Common myeloid progenitor, CD34-positive (primary cell): ENCODE measurements at regions of chr10 and their contacts with region 1.

Region 1: DNA sequence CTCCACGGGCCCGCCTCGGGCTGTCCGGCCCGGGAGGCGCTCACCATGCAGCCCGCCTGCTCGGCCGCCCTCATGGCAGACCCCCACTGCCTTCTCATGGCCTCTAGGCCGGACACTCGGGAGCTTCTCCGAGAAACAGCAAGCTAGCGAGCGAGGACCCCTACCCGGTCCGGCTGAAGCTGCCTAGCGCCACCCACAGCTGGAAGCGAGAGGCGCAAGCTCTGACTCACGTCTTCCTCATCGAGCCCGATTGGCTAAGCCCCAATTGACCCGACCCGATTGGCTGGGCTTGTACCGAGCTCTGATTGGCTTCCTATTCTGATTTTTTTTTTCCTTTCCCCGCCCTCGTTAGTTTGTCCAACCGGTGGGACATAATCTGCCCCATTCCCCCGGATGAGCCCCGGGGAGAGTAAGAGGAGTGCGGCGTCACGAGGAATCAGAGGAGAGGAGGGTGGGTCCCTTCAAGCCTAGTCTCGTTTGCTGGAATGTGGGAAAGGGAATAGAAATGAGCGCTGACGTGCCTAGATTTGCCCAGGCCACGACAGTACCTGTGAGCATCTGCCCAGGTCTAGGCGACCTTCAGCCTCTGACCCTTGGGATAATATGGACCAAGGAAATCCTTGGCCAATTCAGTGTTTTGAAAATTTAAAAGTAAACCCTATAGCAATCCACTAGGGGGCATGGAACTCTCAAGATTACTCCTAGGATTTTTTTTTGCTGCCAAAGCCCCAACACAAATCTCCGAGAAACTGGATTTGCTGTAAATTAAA is at the start of gene TYSND1:
- DNase-seq: peak; percentile 95 to 98 (median 97)
- H3K4me3 ChIP-seq: peak within 1 kb of the TSS; percentile 48 to 82 (median 76)
- H3K27ac ChIP-seq: peak within 1 kb of the TSS in 1 of 2 experiments; percentile 63
- H3K4me1 ChIP-seq: peaks cover 3 to 28% (median 22%) of the 10 kb centered on the region in 4 experiments
- H3K27me3 ChIP-seq: peaks cover 0 to 3% (median 0%) of the 10 kb centered on the region in 5 experiments

Region 2: DNA sequence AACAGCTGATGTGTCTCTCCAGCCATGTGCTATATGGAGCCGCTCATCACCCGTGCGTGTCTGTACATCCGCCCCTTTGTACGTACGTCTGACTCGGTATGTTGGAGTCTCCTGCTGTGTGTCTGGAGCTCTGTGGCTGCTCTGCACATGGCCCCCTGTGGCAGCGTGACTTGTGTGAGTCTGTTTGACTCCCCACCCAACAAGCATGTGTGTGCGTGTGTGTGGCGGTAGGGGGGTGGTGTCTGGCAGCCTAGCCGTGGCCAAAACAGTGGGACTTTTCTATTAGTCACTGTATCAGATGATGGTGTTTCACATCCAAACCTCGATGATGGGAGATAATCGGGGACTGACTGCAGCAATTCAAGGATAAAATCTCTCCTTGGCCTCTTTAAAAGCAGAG is 250.9 kb before region 1 on chr10:
- CTCF ChIA-PET with region 1: no interaction called
- POLR2A ChIA-PET with region 1: no interaction called
- DNase-seq: no peak
- H3K4me3 ChIP-seq: no peak overlapping the region
- H3K27ac ChIP-seq: no peak overlapping the region
- H3K4me1 ChIP-seq: no peaks in the 10 kb centered on the region
- H3K27me3 ChIP-seq: peaks cover 0 to 2% (median 0%) of the 10 kb centered on the region in 5 experiments

Region 3: DNA sequence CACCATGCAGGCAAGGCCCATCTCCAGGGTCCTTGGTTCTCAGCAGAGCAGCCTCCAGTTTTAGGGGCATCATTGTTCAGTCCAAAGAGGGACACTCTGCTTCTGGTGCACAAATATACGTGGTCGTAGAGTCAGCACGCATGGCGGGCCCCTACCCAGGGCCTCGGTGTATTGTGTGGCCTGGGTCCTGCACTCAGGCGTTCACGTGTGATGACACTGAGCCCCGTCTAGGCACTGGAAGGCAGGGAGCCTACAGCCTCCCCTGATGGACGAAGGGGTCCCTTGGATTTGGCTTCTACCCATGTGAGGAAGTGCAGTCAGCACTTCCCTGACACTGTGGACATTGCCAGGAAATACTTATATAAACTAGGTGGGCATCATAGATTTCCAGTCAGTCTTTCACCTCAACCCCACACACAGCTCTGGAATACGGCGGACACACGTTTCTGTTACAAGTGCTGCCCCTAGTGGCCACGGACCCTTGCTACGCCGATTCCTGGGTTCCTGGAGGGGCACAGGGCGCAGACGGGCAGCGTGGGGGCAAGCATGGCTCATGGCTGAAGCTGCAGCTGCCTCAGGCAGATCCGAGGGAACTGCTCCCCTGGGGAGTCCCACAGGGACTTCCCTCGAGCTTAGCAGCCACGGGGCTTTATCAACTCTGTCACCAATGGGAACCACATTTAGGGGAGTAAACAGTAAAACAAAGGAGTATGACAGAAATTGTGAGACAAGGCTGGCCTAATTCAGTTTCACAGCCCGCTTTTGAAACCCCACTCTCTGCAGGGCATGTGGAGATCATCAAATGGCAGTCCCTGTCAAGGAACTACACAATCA is 39.5 kb before region 1 on chr10:
- CTCF ChIA-PET with region 1: interaction called, 11 read pairs
- POLR2A ChIA-PET with region 1: no interaction called
- DNase-seq: peak in 2 of 3 donors; percentile 10 to 17
- H3K4me3 ChIP-seq: no peak overlapping the region
- H3K27ac ChIP-seq: no peak overlapping the region
- H3K4me1 ChIP-seq: no peaks in the 10 kb centered on the region
- H3K27me3 ChIP-seq: no peaks in the 10 kb centered on the region

Region 4: GRCh38 chr10:70115948-70116682 is 30.6 kb before region 1 on chr10:
- CTCF ChIA-PET with region 1: interaction called, 92 read pairs
- POLR2A ChIA-PET with region 1: no interaction called
- DNase-seq: peak; percentile 25 to 48 (median 45)
- H3K4me3 ChIP-seq: no peak overlapping the region
- H3K27ac ChIP-seq: no peak overlapping the region
- H3K4me1 ChIP-seq: peaks cover 0 to 1% (median 0%) of the 10 kb centered on the region in 4 experiments
- H3K27me3 ChIP-seq: peaks cover 0 to 8% (median 0%) of the 10 kb centered on the region in 5 experiments

Region 5: DNA sequence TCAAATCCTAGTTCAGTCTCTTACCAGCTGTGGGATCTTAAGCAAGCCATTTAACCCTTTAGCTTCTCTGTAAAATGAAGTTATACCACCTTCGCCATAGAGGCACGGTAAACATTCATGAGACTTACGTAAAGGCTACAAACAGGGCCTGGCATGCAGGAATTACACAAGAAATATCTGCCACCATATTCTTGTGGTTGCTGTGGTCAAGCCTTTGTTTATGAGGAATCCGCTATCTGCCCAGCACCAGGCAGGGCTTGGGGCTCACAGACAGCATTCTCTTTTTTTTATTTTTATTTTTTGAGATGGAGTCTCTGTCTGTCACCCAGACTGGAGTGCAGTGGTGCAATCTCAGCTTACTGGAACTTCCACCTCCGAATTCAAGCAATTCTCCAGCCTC is 23.9 kb before region 1 on chr10:
- CTCF ChIA-PET with region 1: interaction called, 92 read pairs
- POLR2A ChIA-PET with region 1: no interaction called
- DNase-seq: peak; percentile 69 to 89 (median 83)
- H3K4me3 ChIP-seq: no peak overlapping the region
- H3K27ac ChIP-seq: no peak overlapping the region
- H3K4me1 ChIP-seq: peaks cover 0 to 24% (median 13%) of the 10 kb centered on the region in 4 experiments
- H3K27me3 ChIP-seq: peaks cover 0 to 4% (median 0%) of the 10 kb centered on the region in 5 experiments

Region 6: GRCh38 chr10:70130878-70131559 is 15.7 kb before region 1 on chr10:
- CTCF ChIA-PET with region 1: interaction called, 16 read pairs
- POLR2A ChIA-PET with region 1: no interaction called
- DNase-seq: no peak
- H3K4me3 ChIP-seq: no peak overlapping the region
- H3K27ac ChIP-seq: no peak overlapping the region
- H3K4me1 ChIP-seq: peaks cover 0 to 21% (median 19%) of the 10 kb centered on the region in 4 experiments
- H3K27me3 ChIP-seq: peaks cover 0 to 25% (median 13%) of the 10 kb centered on the region in 5 experiments

Region 7: GRCh38 chr10:70158113-70158512 is 11.4 kb after region 1 on chr10:
- CTCF ChIA-PET with region 1: interaction called, 18 read pairs
- POLR2A ChIA-PET with region 1: no interaction called
- DNase-seq: no peak
- H3K4me3 ChIP-seq: no peak overlapping the region
- H3K27ac ChIP-seq: no peak overlapping the region
- H3K4me1 ChIP-seq: peaks cover 0 to 6% (median 6%) of the 10 kb centered on the region in 4 experiments
- H3K27me3 ChIP-seq: no peaks in the 10 kb centered on the region